K562 (cell line): ENCODE measurements at regions of chr11 and their contacts with region 1.

Region 1: DNA sequence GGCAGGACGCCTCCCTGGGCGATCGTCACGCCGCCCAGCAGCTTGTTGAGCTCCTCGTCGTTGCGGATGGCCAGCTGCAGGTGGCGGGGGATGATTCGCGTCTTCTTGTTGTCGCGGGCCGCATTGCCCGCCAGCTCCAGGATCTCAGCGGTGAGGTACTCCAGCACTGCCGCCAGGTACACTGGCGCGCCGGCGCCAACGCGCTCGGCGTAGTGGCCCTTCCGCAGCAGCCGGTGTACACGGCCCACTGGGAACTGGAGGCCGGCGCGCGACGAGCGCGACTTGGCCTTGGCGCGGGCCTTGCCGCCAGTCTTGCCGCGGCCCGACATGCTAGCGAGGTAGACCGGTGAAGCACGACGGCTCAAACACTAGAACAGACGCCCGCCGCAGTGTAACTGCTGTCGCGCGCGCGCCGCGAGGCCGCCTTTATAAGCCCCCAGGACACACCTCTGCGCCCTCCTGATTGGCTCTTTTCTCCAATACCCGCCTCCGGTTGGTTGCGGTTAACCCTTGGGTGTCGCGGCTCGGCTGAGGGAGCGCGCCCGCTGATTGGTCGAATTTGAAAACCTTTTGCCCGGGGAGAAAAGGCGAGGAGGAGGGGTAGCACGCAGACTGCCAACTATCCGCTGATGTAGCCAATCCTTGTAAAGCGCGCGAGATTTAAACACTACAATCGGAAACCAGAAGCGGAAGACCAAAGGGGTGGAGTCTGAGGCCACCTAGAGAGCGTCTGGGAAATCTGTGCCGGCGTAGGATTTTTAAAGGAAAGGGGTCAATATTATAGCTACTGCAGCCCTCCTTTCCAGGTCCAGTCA is 6.4 kb downstream of the DPAGT1 start:
- DNase-seq: peak; percentile 96 to 99 (median 98)
- ATAC-seq: peak; percentile 81
- H3K4me3 ChIP-seq: peak overlapping the region; percentile 94
- H3K27ac ChIP-seq: peak overlapping the region; percentile 95
- H3K4me1 ChIP-seq: peaks cover 24 to 28% of the 10 kb centered on the region in 2 experiments; a peak in 4 of 5 replicates
- H3K27me3 ChIP-seq: no peaks in the 10 kb centered on the region; a peak in 1 of 5 replicates
- CTCF ChIP-seq: peak; percentile 19 to 43 (median 42); a peak in 3 of 6 replicates
- EP300 ChIP-seq: no peak
- POLR2A ChIP-seq: peak; percentile 100
- RAD21 ChIP-seq: peak; percentile 25 to 31

Region 2: GRCh38 chr11:119067371-119068222 is 27.7 kb before region 1 on chr11 and contains the start of gene VPS11:
- CTCF ChIA-PET with region 1: no interaction called
- POLR2A ChIA-PET with region 1: interaction called, 68 read pairs
- in situ Hi-C with region 1: no loop called
- intact Hi-C with region 1: loop called (anchors 1 kb)
- DNase-seq: peak; percentile 93 to 99 (median 96)
- ATAC-seq: peak; percentile 94
- H3K4me3 ChIP-seq: peak within 1 kb of the TSS; percentile 57
- H3K27ac ChIP-seq: peak within 1 kb of the TSS; percentile 71
- H3K4me1 ChIP-seq: peaks cover 15 to 21% of the 10 kb centered on the region in 2 experiments; a peak in 4 of 5 replicates
- H3K27me3 ChIP-seq: no peaks in the 10 kb centered on the region
- CTCF ChIP-seq: no peak
- EP300 ChIP-seq: 0 out of 2 replicates have a peak, but pooled peaks have one; percentile 21
- POLR2A ChIP-seq: peak; percentile 80
- RAD21 ChIP-seq: no peak
- polyA plus RNA-seq, gene VPS11: 19.7 to 31.6 TPM

Region 3: DNA sequence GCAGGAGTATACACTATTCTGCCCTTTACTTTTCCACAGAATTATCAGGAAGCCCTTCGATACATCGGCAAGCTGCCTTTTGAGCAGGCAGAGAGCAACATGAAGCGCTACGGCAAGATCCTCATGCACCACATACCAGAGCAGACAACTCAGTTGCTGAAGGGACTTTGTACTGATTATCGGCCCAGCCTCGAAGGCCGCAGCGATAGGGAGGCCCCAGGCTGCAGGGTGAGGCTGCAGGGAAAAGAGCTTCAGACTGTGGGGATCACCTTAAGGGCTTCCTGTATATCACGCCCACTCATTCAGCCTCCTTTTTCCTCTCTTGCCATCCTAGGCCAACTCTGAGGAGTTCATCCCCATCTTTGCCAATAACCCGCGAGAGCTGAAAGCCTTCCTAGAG is 17.4 kb before region 1 on chr11:
- CTCF ChIA-PET with region 1: no interaction called
- POLR2A ChIA-PET with region 1: interaction called, 17 read pairs
- in situ Hi-C with region 1: no loop called
- intact Hi-C with region 1: no loop called
- DNase-seq: no peak
- ATAC-seq: no peak
- H3K4me3 ChIP-seq: no peak overlapping the region
- H3K27ac ChIP-seq: no peak overlapping the region
- H3K4me1 ChIP-seq: no peaks in the 10 kb centered on the region
- H3K27me3 ChIP-seq: no peaks in the 10 kb centered on the region
- CTCF ChIP-seq: no peak
- EP300 ChIP-seq: no peak
- POLR2A ChIP-seq: no peak
- RAD21 ChIP-seq: no peak

Region 4: DNA sequence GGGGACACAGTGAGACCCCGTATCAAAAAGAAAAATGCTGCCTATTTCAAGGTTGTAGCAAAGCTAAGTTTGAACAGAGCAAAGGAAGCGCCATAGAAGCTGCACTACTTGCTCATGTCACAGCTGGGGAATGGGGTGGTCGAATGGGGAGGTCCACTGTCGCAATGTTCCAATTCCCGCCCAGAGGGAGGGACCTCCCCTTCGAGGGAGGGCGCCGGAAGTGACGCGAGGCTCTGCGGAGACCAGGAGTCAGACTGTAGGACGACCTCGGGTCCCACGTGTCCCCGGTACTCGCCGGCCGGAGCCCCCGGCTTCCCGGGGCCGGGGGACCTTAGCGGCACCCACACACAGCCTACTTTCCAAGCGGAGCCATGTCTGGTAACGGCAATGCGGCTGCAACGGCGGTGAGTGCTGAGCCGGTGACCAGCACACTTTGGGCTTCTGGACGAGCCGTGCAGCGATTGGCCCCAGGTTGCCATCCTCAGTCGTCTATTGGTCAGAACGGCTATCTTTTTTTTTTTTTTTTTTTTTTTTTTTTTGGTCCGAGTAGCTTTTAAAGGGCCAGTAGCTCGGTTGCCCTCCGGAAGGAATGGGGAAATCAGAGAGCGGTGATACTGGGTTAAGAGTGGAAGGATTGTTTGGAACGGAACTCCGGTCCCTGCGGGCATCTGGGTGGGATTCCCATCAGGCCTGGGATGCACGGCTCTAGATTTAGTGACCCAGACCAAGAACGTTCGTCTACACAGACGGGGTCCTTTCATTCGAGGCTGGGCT is 10.4 kb before region 1 on chr11 and contains the start of gene HMBS:
- CTCF ChIA-PET with region 1: no interaction called
- POLR2A ChIA-PET with region 1: interaction called, 61 read pairs
- in situ Hi-C with region 1: no loop called
- intact Hi-C with region 1: no loop called
- DNase-seq: peak; percentile 86 to 98 (median 88)
- ATAC-seq: peak; percentile 82
- H3K4me3 ChIP-seq: peak within 1 kb of the TSS; percentile 79
- H3K27ac ChIP-seq: peak within 1 kb of the TSS; percentile 99
- H3K4me1 ChIP-seq: peaks cover 25 to 42% of the 10 kb centered on the region in 2 experiments; a peak in 4 of 5 replicates
- H3K27me3 ChIP-seq: no peaks in the 10 kb centered on the region
- CTCF ChIP-seq: no peak
- EP300 ChIP-seq: no peak
- POLR2A ChIP-seq: peak; percentile 92
- RAD21 ChIP-seq: 0 out of 4 replicates have a peak, but pooled peaks of 1 of the 2 experiments have one; percentile 6
- polyA plus RNA-seq, gene HMBS: 308 to 385 TPM